ENCODE measurements at regions of chr1 and their contacts with region 1.

Region 1: GRCh38 chr1:176577646-176578197 is 114.7 kb downstream of the PAPPA2 start:
- DNase-seq: no peak
- ATAC-seq: no peak
- H3K4me3 ChIP-seq: no peak overlapping the region
- H3K27ac ChIP-seq: no peak overlapping the region
- H3K4me1 ChIP-seq: no peaks in the 10 kb centered on the region
- H3K27me3 ChIP-seq: no peaks in the 10 kb centered on the region

Region 2: GRCh38 chr1:176517484-176517883 is 60.2 kb before region 1 on chr1:
- intact Hi-C with region 1: no loop called
- DNase-seq: no peak
- ATAC-seq: peak in 1 of 2 donors; percentile 82
- H3K4me3 ChIP-seq: no peak overlapping the region
- H3K27ac ChIP-seq: peak overlapping the region; percentile 66
- H3K4me1 ChIP-seq: no peaks in the 10 kb centered on the region
- H3K27me3 ChIP-seq: no peaks in the 10 kb centered on the region

Region 3: DNA sequence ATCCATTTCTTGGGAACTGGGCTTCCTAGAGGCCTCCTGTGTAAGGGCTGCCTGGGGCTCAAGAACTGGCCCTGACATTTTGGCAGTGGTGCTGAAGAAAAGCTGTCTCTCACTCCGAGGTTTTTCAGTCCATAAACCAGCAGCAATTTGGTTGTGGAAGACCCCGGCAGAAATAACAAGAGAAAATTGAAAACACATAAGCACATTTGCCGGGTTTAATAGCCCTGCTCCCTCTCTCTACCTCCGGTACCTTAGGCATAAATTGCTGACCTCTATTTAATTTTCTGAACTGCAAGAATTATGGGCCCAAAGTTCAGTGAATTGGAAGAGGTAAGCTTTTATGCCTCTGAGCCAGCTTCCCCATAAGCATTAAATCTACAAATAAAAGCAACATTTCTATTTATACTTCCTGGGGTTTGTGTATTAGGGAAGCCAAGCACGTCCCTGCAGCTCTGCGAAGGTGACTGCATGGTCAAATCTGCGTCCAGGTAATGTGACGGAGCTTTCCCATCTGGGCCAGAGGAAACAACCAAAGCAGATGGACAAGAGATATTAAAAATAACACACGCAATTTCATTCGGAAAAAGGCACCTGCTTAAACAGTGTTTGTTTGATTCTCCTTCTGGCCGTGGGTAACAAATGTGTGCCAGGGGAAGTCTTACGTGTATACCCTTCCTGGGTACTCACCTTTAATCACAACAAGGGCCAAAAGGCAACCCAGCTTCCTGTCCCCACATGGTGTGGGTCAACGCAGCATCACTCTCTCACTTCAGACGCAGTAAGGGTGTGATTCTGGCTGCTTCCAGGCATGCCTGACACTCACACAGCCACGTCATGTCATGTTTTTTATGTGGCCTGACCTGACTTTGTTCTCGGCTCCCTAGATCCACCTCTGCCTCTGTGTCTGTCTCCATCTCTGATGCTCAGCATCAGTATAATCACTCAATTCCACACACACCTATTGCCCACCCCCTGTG is 45.5 kb before region 1 on chr1:
- intact Hi-C with region 1: no loop called
- DNase-seq: no peak
- ATAC-seq: peak in 1 of 2 donors; percentile 41
- H3K4me3 ChIP-seq: no peak overlapping the region
- H3K27ac ChIP-seq: no peak overlapping the region
- H3K4me1 ChIP-seq: no peaks in the 10 kb centered on the region
- H3K27me3 ChIP-seq: no peaks in the 10 kb centered on the region

Region 4: GRCh38 chr1:176682830-176683535 is 105.3 kb after region 1 on chr1:
- intact Hi-C with region 1: loop called in 1 of 4 experiments (anchors 10 kb)
- DNase-seq: no peak
- ATAC-seq: no peak
- H3K4me3 ChIP-seq: no peak overlapping the region
- H3K27ac ChIP-seq: no peak overlapping the region
- H3K4me1 ChIP-seq: no peaks in the 10 kb centered on the region
- H3K27me3 ChIP-seq: no peaks in the 10 kb centered on the region

Region 5: DNA sequence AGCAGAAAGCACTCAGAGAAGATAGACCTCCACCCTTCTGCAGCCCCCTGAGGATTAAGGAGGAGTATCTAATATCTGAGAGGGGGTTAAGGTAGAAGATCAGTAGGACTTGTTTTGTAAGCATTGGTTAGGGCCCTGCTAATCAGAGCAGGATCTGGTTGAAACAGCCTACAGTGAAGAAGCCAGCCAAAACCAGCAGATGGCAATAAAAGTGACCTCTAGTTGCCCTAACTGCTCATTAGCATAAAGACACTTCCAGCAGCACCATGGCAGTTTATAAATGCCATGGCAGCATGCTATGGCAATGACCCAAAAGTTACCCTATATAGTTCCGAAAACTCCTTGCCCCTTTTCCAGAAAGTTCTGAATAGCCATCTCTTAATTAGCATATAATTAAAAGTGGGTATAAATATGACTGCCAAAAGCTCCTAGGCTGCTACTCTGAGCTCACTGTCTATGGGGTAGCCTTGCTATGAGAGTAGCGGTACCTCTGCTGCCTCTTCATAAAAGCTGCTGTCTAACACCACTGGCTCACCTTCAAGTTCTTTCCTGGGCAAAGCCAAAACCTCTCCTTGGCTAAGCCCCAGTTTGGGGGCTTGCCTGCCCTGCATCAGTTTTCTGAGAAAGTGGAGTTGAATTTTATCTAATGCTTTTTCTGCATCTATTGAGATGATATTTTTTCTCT is 139.5 kb after region 1 on chr1:
- intact Hi-C with region 1: no loop called
- DNase-seq: no peak
- ATAC-seq: no peak
- H3K4me3 ChIP-seq: no peak overlapping the region
- H3K27ac ChIP-seq: no peak overlapping the region
- H3K4me1 ChIP-seq: no peaks in the 10 kb centered on the region
- H3K27me3 ChIP-seq: no peaks in the 10 kb centered on the region

Measured in right cardiac atrium (tissue), 5 donors.